ENCODE measurements at regions of chr9 and their contacts with region 1.

Region 1: GRCh38 chr9:35664531-35665470 is at the start of gene ARHGEF39:
- DNase-seq: peak; percentile 86
- ATAC-seq: peak; percentile 92
- H3K4me3 Mint-ChIP-seq: peak within 1 kb of the TSS; percentile 75
- H3K27ac Mint-ChIP-seq: peak within 1 kb of the TSS; percentile 59
- H3K4me1 Mint-ChIP-seq: peaks cover 47% of the 10 kb centered on the region
- H3K27me3 Mint-ChIP-seq: no peaks in the 10 kb centered on the region
- total RNA-seq, gene ARHGEF39: 19.1 to 23.1 TPM

Region 2: GRCh38 chr9:35518226-35518821 is 146.5 kb before region 1 on chr9:
- CTCF ChIA-PET with region 1: no interaction called
- POLR2A ChIA-PET with region 1: no interaction called
- intact Hi-C with region 1: no loop called
- DNase-seq: no peak
- ATAC-seq: no peak
- H3K4me3 Mint-ChIP-seq: no peak overlapping the region
- H3K27ac Mint-ChIP-seq: no peak overlapping the region
- H3K4me1 Mint-ChIP-seq: no peaks in the 10 kb centered on the region
- H3K27me3 Mint-ChIP-seq: no peaks in the 10 kb centered on the region

Region 3: GRCh38 chr9:35690431-35691333 is 25.9 kb after region 1 on chr9:
- CTCF ChIA-PET with region 1: interaction called, 23 read pairs
- POLR2A ChIA-PET with region 1: interaction called, 9 read pairs
- intact Hi-C with region 1: loop called in 1 of 2 experiments (anchors 1 kb)
- DNase-seq: peak; percentile 56
- ATAC-seq: no peak
- H3K4me3 Mint-ChIP-seq: peak overlapping the region; percentile 71
- H3K27ac Mint-ChIP-seq: peak overlapping the region; percentile 47
- H3K4me1 Mint-ChIP-seq: peaks cover 23% of the 10 kb centered on the region
- H3K27me3 Mint-ChIP-seq: no peaks in the 10 kb centered on the region

Region 4: DNA sequence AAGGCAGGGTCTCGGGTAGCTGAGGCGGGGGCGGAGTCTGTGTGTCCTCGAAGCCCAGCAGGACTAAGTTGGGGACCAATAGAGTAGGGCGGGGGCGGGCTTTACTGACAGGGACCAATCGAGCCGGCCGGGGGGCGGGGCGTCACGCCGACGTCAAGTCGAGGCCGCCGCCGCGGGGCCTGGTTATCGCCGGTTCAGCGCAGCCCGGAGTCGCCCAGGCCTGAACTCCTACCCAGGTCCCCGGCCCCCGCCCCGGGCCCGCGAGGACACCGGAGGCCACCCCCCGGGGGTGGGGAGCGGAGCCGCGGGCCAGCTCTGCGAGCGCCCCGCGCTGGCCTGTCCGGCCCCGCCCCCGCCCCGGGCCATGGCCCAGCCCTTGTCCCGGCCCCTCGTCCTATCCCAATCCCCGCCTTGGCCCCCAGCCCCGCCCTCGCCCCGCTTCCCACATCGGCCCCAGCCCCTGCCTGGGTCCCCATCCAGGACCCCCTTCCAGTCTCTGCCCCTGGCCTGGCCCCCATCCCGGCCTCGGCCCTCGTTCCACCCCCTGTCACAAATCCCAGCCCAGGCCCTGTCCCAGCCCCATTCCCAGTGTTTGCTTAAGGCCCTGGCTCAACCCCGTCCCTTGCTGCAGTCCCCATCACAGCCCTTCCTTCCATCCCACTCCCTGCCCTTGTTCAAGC is 164.4 kb after region 1 on chr9 and contains the start of gene TMEM8B:
- CTCF ChIA-PET with region 1: no interaction called
- POLR2A ChIA-PET with region 1: no interaction called
- intact Hi-C with region 1: loop called in 1 of 2 experiments (anchors 1 kb)
- DNase-seq: peak; percentile 98
- ATAC-seq: peak; percentile 92
- H3K4me3 Mint-ChIP-seq: peak within 1 kb of the TSS; percentile 78
- H3K27ac Mint-ChIP-seq: peak within 1 kb of the TSS; percentile 78
- H3K4me1 Mint-ChIP-seq: peaks cover 13% of the 10 kb centered on the region
- H3K27me3 Mint-ChIP-seq: no peaks in the 10 kb centered on the region
- total RNA-seq, gene TMEM8B: 5.8 to 6.9 TPM

Measured in activated CD4-positive, alpha-beta T cell treated with anti-CD3 and anti-CD28 coated beads for 36 hours (primary cell).